ENCODE measurements at regions of chr7 and their contacts with region 1.

Region 1: GRCh38 chr7:107725151-107725740 is 18.7 kb upstream of the CBLL1 start:
- DNase-seq: peak in 30 of 35 experiments; percentile 4 to 78 (median 30)
- ATAC-seq: peak in 2 of 4 experiments; percentile 44 to 48
- H3K4me3 ChIP-seq: no peak overlapping the region
- H3K4me3 Mint-ChIP-seq: no peak overlapping the region
- H3K27ac ChIP-seq: no peak overlapping the region
- H3K27ac Mint-ChIP-seq: no peak overlapping the region
- H3K4me1 ChIP-seq: no peaks in the 10 kb centered on the region
- H3K4me1 Mint-ChIP-seq: no peaks in the 10 kb centered on the region
- H3K27me3 ChIP-seq: peaks cover 2% of the 10 kb centered on the region in 2 experiments
- H3K27me3 Mint-ChIP-seq: peaks cover 8 to 15% of the 10 kb centered on the region in 2 donors

Region 2: GRCh38 chr7:107462740-107463444 is 262.4 kb before region 1 on chr7:
- CTCF ChIA-PET with region 1: interaction called, 4 to 22 read pairs
- POLR2A ChIA-PET with region 1: no interaction called
- DNase-seq: peak in 34 of 35 experiments; percentile 9 to 73 (median 36)
- ATAC-seq: peak; percentile 43 to 77 (median 68)
- H3K4me3 ChIP-seq: no peak overlapping the region
- H3K4me3 Mint-ChIP-seq: no peak overlapping the region
- H3K27ac ChIP-seq: no peak overlapping the region
- H3K27ac Mint-ChIP-seq: peak overlapping the region in 1 of 2 donors; percentile 34
- H3K4me1 ChIP-seq: no peaks in the 10 kb centered on the region
- H3K4me1 Mint-ChIP-seq: peaks cover 0 to 5% (median 5%) of the 10 kb centered on the region in 3 donors
- H3K27me3 ChIP-seq: no peaks in the 10 kb centered on the region
- H3K27me3 Mint-ChIP-seq: no peaks in the 10 kb centered on the region

Region 3: DNA sequence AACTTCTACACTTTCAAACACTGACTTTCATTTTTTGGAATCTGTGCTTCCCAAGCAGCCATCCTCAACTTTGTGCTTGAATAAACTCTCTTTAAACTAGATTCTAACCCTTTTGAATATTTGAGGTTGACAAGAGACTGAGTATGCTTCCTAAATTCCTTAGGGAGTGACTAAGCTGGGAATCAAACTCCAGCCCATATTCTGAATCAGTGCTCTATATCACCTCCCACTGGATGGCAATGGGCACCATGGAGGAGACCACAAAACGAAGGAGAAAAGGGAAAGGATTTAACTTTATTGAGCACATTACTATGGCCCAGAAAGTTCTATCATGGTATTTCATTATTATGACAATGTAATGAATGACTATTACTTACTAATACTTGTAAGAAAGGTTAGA is 81.8 kb before region 1 on chr7:
- CTCF ChIA-PET with region 1: no interaction called
- POLR2A ChIA-PET with region 1: no interaction called
- DNase-seq: no peak
- ATAC-seq: no peak
- H3K4me3 ChIP-seq: no peak overlapping the region
- H3K4me3 Mint-ChIP-seq: no peak overlapping the region
- H3K27ac ChIP-seq: no peak overlapping the region
- H3K27ac Mint-ChIP-seq: no peak overlapping the region
- H3K4me1 ChIP-seq: no peaks in the 10 kb centered on the region
- H3K4me1 Mint-ChIP-seq: peaks cover 0 to 6% (median 2%) of the 10 kb centered on the region in 3 donors
- H3K27me3 ChIP-seq: no peaks in the 10 kb centered on the region
- H3K27me3 Mint-ChIP-seq: peaks cover 0 to 3% of the 10 kb centered on the region in 2 donors